Colonic mucosa (tissue), 4 donors: ENCODE measurements at regions of chr16 and their contacts with region 1.

Region 1: DNA sequence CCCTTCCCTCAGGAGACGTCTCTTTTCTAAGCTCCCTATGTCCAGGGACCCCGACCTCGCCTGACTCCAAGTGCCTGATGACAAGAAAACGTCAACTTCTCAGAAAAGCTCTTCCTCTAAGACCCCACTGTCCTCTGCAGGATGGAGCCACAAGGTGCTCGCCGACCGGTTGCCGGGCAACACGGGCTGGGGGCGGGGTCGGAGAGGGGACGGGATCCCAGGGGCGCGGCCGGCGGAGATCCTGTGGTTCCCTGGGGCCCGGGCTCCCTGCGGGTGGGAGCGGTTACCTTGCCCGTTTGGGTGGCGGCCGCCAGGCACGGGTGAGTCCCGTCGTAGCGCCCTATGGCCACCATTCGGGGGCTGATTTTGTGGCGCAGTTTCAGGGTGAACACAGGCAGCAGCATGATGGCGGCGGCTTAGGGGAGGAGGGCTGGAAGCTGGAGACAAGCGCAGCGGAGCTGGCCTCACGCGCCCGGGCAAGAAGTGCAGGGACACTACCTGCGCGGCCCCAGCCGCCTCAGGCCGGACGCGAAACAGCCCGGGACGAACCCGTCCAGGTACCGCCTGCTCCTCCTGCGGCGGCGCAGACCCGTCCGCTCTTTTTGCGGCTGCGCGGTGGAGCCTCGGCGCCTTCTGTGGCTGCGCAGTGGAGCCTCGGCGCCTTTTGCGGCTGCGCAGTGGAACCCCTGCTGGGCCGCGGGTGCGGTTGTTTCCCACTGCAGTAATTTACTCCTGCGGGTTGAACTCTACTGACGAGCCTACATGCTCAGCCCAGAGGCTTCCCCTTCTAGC is at the start of gene BBS2:
- DNase-seq: peak; percentile 92
- H3K4me3 ChIP-seq: peak within 1 kb of the TSS; percentile 99
- H3K27ac ChIP-seq: peak within 1 kb of the TSS; percentile 97
- H3K4me1 ChIP-seq: peaks cover 6% of the 10 kb centered on the region
- H3K27me3 ChIP-seq: no peaks in the 10 kb centered on the region
- CTCF ChIP-seq: no peak
- total RNA-seq, gene BBS2: 22.5 to 32.1 TPM

Region 2: GRCh38 chr16:56608043-56608875 is 88.6 kb after region 1 on chr16 and contains the start of gene MT2A:
- intact Hi-C with region 1: loop called (anchors 10 kb)
- DNase-seq: peak; percentile 96
- H3K4me3 ChIP-seq: peak within 1 kb of the TSS; percentile 54
- H3K27ac ChIP-seq: peak within 1 kb of the TSS; percentile 88
- H3K4me1 ChIP-seq: peaks cover 11% of the 10 kb centered on the region
- H3K27me3 ChIP-seq: no peaks in the 10 kb centered on the region
- CTCF ChIP-seq: no peak
- total RNA-seq, gene MT2A: 239 to 320 TPM

Region 3: GRCh38 chr16:56851671-56852400 is 332.2 kb after region 1 on chr16:
- intact Hi-C with region 1: no loop called
- DNase-seq: no peak
- H3K4me3 ChIP-seq: no peak overlapping the region
- H3K27ac ChIP-seq: no peak overlapping the region
- H3K4me1 ChIP-seq: no peaks in the 10 kb centered on the region
- H3K27me3 ChIP-seq: no peaks in the 10 kb centered on the region
- CTCF ChIP-seq: no peak